Astrocyte of the cerebellum (primary cell): ENCODE measurements at regions of chr3 and their contacts with region 1.

Region 1: DNA sequence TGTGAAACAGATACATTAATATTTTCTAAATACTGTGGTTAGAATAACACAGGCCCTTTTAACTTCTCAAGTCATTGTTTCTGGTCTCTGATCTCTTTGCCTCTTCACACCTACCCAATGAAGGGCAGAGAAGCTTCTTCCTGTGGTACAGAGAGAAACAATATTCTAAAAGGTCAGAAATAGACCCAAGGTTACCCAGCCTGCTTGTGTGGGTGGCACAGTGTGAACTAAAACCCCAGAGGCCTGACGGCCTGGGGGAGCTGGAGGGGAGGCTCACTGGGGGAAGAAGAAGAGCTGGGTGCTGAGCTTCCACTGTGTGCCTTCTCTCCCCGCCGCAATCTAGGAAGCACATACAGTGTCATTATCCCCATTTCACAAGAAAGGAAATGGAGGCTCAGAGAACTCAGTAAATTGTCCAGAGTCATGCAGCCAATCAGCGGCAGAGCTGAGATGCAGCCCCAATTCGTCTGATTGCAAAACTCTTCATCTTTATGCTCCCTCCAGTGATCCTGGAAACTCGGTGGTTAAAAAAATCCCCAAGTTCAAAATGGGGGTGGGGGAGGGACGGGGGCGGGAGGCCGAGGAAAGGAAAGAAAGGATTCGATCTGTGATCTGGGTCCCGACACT is 64.1 kb upstream of the HEG1 start:
- DNase-seq: no peak
- H3K4me3 ChIP-seq: no peak overlapping the region
- CTCF ChIP-seq: no peak

Region 2: DNA sequence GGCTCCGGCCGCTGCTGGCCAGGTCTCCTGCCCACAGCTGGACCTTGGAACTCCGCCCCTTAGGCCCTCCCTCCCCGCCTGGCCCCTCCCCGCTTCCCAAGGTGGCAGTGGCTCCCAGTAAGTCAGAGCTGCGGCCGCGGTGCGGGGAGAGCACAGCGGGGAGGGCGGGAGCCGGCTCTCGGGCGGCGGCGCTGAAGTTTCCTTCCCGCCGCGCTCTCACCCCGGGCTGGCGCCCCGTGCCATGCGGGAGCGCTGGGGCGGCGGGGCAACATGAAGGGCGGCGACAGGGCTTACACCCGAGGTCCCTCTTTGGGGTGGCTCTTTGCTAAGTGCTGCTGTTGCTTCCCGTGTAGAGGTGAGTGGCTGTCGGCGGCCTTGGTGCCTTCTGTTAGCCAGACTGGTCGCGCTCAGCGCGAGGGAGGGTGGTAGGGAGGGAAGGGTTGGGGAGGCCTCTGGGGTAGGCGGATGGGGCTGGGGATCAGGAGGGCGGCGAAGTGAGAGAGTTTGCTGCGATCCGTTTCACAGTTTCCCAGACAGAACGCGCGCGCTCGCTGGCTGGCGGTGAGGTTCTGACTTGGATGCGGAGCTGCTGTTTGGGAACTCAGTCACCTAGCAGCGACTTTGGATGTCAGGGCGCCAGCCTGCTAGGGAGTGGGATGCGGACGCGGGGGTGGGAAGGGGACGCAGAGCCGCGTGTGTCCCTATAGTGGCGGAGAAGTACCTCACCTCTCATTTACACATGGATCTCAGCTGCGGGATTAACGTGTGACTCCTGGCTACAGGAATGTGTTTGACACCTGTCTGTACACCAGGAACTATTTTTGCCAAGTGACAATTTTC is 535.1 kb before region 1 on chr3:
- in situ Hi-C with region 1: no loop called
- DNase-seq: no peak
- H3K4me3 ChIP-seq: peak overlapping the region; percentile 49
- CTCF ChIP-seq: no peak

Region 3: GRCh38 chr3:125011941-125012340 is 107.9 kb before region 1 on chr3:
- in situ Hi-C with region 1: loop called (anchors 5 kb)
- DNase-seq: peak; percentile 83
- H3K4me3 ChIP-seq: no peak overlapping the region
- CTCF ChIP-seq: no peak

Region 4: GRCh38 chr3:125083776-125084175 is 36.1 kb before region 1 on chr3:
- in situ Hi-C with region 1: no loop called
- DNase-seq: no peak
- H3K4me3 ChIP-seq: no peak overlapping the region
- CTCF ChIP-seq: no peak

Region 5: DNA sequence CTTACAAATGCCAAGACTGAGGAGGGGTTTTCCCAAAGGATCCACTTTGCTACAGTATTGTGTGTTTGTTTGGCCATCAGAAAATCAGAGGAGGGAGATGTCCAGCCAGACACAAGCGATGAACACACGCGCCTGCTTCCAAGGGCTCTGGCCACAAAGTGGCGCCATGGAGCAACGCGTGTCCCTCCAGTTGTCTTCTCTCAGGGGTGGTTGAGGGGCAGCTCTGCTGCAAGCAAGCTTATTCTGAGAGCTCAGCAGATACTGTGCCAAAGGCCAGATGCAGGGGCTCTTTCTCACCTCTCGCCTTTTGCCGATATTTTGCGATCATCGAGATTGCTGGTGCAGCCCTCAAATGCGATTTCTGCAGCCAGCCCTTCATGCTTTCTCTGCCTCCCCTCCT is 564.3 kb after region 1 on chr3:
- in situ Hi-C with region 1: no loop called
- DNase-seq: no peak
- H3K4me3 ChIP-seq: no peak overlapping the region
- CTCF ChIP-seq: peak; percentile 38